ENCODE measurements at regions of chr1 and their contacts with region 1.

Region 1: GRCh38 chr1:86965012-86965826 is 50.8 kb downstream of the HS2ST1 start:
- DNase-seq: peak in 2 of 4 experiments; percentile 24 to 56
- ATAC-seq: peak; percentile 86
- H3K4me3 ChIP-seq: no peak overlapping the region
- H3K27ac ChIP-seq: no peak overlapping the region
- H3K4me1 ChIP-seq: peaks cover 0 to 6% of the 10 kb centered on the region in 2 experiments; a peak in 1 of 5 replicates
- H3K27me3 ChIP-seq: no peaks in the 10 kb centered on the region
- CTCF ChIP-seq: peak; percentile 61 to 63 (median 62); a peak in 5 of 6 replicates
- EP300 ChIP-seq: no peak
- POLR2A ChIP-seq: no peak
- RAD21 ChIP-seq: peak; percentile 36 to 80; a peak in 3 of 4 replicates

Region 2: GRCh38 chr1:86788300-86789206 is 176.7 kb before region 1 on chr1:
- CTCF ChIA-PET with region 1: no interaction called
- POLR2A ChIA-PET with region 1: no interaction called
- in situ Hi-C with region 1: no loop called
- intact Hi-C with region 1: loop called (anchors 10 kb)
- DNase-seq: peak in 2 of 4 experiments; percentile 22 to 54
- ATAC-seq: peak; percentile 54
- H3K4me3 ChIP-seq: no peak overlapping the region
- H3K27ac ChIP-seq: no peak overlapping the region; the same call in 2 of the 3 replicates
- H3K4me1 ChIP-seq: peaks cover 8 to 35% of the 10 kb centered on the region in 2 experiments
- H3K27me3 ChIP-seq: no peaks in the 10 kb centered on the region
- CTCF ChIP-seq: no peak
- EP300 ChIP-seq: peak; percentile 50
- POLR2A ChIP-seq: no peak
- RAD21 ChIP-seq: no peak

Region 3: GRCh38 chr1:86991549-86992186 is 26.4 kb after region 1 on chr1:
- CTCF ChIA-PET with region 1: no interaction called
- POLR2A ChIA-PET with region 1: no interaction called
- in situ Hi-C with region 1: no loop called
- intact Hi-C with region 1: no loop called
- DNase-seq: peak in 2 of 4 experiments; percentile 28 to 85
- ATAC-seq: peak; percentile 78
- H3K4me3 ChIP-seq: 0 out of 2 replicates have a peak overlapping the region, but pooled peaks have one; percentile 12
- H3K27ac ChIP-seq: peak overlapping the region; percentile 77
- H3K4me1 ChIP-seq: peaks cover 13 to 49% of the 10 kb centered on the region in 2 experiments; a peak in 4 of 5 replicates
- H3K27me3 ChIP-seq: no peaks in the 10 kb centered on the region
- CTCF ChIP-seq: no peak
- EP300 ChIP-seq: peak; percentile 61; the same call in 1 of the 2 replicates
- POLR2A ChIP-seq: no peak
- RAD21 ChIP-seq: no peak

Region 4: DNA sequence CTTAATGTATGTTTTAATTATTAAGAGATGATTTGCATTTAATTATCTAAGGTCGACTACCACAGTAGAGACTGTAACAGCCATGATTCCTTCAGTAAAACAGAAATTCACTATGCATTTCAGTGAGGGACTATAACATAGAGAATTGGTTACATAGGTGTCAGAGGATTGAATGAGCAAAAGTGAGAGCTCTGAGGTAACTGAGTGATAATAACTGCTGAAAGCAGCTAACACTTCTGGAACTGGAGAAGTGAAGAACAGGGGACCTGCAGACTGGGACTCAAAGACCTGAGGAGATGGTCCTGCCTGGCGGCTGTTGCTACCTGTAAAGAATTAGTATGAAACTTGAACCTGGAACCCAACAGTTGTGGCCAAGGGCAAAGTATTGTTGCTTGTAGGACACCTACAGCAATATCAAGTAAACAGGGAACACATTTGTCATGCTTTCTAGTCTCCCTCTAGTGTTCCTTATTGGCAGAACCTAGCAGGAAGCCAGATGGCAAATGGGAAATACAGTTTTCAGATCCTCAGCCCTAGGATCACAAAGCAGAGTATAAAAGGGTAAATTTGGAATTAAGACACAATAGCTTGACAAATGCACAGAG is 59.8 kb after region 1 on chr1:
- CTCF ChIA-PET with region 1: no interaction called
- POLR2A ChIA-PET with region 1: no interaction called
- in situ Hi-C with region 1: no loop called
- intact Hi-C with region 1: loop called (anchors 5 kb)
- DNase-seq: peak; percentile 29 to 69 (median 46)
- ATAC-seq: peak; percentile 93
- H3K4me3 ChIP-seq: no peak overlapping the region
- H3K27ac ChIP-seq: peak overlapping the region; percentile 40; the same call in 2 of the 3 replicates
- H3K4me1 ChIP-seq: peaks cover 7 to 8% of the 10 kb centered on the region in 2 experiments; a peak in 3 of 5 replicates
- H3K27me3 ChIP-seq: no peaks in the 10 kb centered on the region
- CTCF ChIP-seq: peak; percentile 64 to 83 (median 70)
- EP300 ChIP-seq: peak; percentile 19; the same call in 1 of the 2 replicates
- POLR2A ChIP-seq: no peak
- RAD21 ChIP-seq: peak; percentile 73 to 85

Region 5: GRCh38 chr1:87084244-87084836 is 119.1 kb after region 1 on chr1:
- CTCF ChIA-PET with region 1: no interaction called
- POLR2A ChIA-PET with region 1: no interaction called
- in situ Hi-C with region 1: no loop called
- intact Hi-C with region 1: loop called (anchors 5 kb)
- DNase-seq: peak in 1 of 4 experiments; percentile 15
- ATAC-seq: peak; percentile 49; the same call in 1 of the 3 replicates
- H3K4me3 ChIP-seq: no peak overlapping the region
- H3K27ac ChIP-seq: no peak overlapping the region
- H3K4me1 ChIP-seq: no peaks in the 10 kb centered on the region
- H3K27me3 ChIP-seq: no peaks in the 10 kb centered on the region
- CTCF ChIP-seq: peak; percentile 22 to 60 (median 33); a peak in 4 of 6 replicates
- EP300 ChIP-seq: no peak
- POLR2A ChIP-seq: no peak
- RAD21 ChIP-seq: peak; percentile 66 to 71